Left ventricle myocardium superior (tissue), 1 donor: ENCODE measurements at regions of chr1 and their contacts with region 1.

Region 1: GRCh38 chr1:92858564-92859399 is 26.9 kb downstream of the RPL5 start:
- DNase-seq: no peak
- ATAC-seq: peak; percentile 87

Region 2: GRCh38 chr1:92201973-92202372 is 656.8 kb before region 1 on chr1:
- intact Hi-C with region 1: no loop called
- DNase-seq: no peak
- ATAC-seq: no peak

Region 3: GRCh38 chr1:92994105-92994712 is 135.4 kb after region 1 on chr1:
- intact Hi-C with region 1: loop called (anchors 1 kb)
- DNase-seq: no peak
- ATAC-seq: peak; percentile 94